Vagina (tissue), 2 donors: ENCODE measurements at regions of chr14 and their contacts with region 1.

Region 1: GRCh38 chr14:65832431-65833266 is 420.1 kb downstream of the FUT8 start:
- DNase-seq: no peak
- H3K4me3 ChIP-seq: no peak overlapping the region
- H3K27ac ChIP-seq: no peak overlapping the region
- H3K4me1 ChIP-seq: no peaks in the 10 kb centered on the region
- H3K27me3 ChIP-seq: no peaks in the 10 kb centered on the region
- CTCF ChIP-seq: no peak
- POLR2A ChIP-seq: no peak

Region 2: DNA sequence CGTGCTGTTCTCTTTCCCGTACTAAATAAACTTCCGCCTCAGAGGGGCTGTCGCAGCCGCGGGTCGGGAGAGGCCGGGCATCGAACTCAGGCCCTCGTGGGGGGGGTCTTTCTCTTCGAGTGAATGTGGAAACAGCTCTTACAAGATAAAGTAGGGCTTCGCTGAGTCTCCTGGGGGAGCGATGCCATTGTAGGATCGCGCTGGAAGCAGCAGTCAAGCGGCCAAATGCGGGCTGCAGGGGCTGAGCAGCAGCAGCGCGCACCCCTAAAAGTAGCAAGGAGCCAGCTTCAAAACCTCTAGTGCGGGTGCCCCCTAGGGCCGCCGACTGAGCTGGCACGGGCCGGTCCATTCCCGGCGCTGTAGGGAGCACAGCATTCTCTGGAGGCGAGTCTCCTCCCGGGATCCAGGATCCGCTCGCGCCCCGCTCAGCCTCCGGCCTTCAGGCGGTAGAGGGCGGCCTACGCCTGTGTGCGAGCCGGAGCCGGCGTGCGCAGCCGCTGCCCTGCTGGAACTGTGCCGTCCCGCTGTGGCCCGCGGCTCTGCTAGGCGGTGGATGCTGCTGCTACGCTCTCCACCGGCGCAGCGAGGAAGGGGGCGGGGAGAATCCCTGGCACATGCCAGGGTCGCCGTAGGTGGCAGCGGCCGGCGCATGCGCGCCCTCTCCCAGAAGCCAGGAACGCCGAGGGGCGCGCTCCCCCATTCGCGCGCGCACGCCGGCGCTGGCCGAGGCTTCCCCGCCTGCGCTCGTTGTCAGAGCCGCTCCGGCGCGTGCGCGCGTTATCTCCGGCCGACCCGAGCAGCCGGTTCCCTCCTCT is 420.4 kb before region 1 on chr14 and contains the start of gene FUT8:
- intact Hi-C with region 1: loop called (anchors 10 kb)
- DNase-seq: peak in 1 of 2 donors; percentile 92
- H3K4me3 ChIP-seq: peak within 1 kb of the TSS; percentile 69 to 94
- H3K27ac ChIP-seq: peak within 1 kb of the TSS; percentile 93
- H3K4me1 ChIP-seq: peaks cover 20% of the 10 kb centered on the region
- H3K27me3 ChIP-seq: no peaks in the 10 kb centered on the region
- CTCF ChIP-seq: peak; percentile 20 to 47 (median 34)
- POLR2A ChIP-seq: peak in 1 of 2 donors; percentile 34
- total RNA-seq, gene FUT8: 35.1 TPM

Region 3: GRCh38 chr14:65756880-65757279 is 75.8 kb before region 1 on chr14:
- intact Hi-C with region 1: no loop called
- DNase-seq: no peak
- H3K4me3 ChIP-seq: no peak overlapping the region
- H3K27ac ChIP-seq: no peak overlapping the region
- H3K4me1 ChIP-seq: no peaks in the 10 kb centered on the region
- H3K27me3 ChIP-seq: no peaks in the 10 kb centered on the region
- CTCF ChIP-seq: no peak
- POLR2A ChIP-seq: no peak

Region 4: GRCh38 chr14:65860956-65861611 is 28.4 kb after region 1 on chr14:
- intact Hi-C with region 1: no loop called
- DNase-seq: no peak
- H3K4me3 ChIP-seq: no peak overlapping the region
- H3K27ac ChIP-seq: no peak overlapping the region
- H3K4me1 ChIP-seq: no peaks in the 10 kb centered on the region
- H3K27me3 ChIP-seq: no peaks in the 10 kb centered on the region
- CTCF ChIP-seq: no peak
- POLR2A ChIP-seq: no peak

Region 5: DNA sequence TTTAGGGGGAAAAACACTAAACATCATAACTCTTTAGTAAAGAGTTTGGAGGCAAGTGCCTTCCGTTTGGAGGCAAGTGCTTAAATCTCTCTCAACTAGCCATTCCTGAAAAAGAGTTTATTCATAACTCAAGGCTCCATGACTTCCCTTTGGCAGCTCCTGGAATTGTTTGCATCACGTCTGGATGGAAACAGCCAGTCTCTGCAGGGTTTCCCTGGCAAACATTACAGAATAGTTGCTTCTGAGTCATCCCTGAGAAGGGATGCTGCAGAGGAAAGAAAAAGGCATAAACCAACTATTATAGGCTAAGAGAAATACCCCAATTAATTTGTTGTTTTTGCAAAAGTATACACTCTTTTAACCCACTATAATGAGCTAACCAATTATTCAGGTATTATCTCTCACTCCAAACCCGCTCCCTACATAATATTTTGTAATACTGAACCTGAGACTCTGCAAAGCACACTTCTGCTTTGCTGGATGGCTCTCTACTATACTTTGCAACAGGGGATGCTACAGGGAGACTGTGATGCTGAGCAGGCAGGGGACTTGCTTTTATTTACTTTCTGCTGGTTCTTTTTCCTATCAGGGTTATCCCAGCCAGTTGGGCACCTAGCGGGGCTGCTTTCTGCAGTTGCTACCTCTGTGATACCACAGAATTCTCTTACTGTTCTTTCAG is 77.6 kb after region 1 on chr14:
- intact Hi-C with region 1: no loop called
- DNase-seq: no peak
- H3K4me3 ChIP-seq: no peak overlapping the region
- H3K27ac ChIP-seq: no peak overlapping the region
- H3K4me1 ChIP-seq: no peaks in the 10 kb centered on the region
- H3K27me3 ChIP-seq: no peaks in the 10 kb centered on the region
- CTCF ChIP-seq: no peak
- POLR2A ChIP-seq: no peak